Right cardiac atrium (tissue), 5 donors: ENCODE measurements at regions of chr18 and their contacts with region 1.

Region 1: GRCh38 chr18:58263055-58263957 is 219.3 kb downstream of the NEDD4L start:
- DNase-seq: no peak
- ATAC-seq: peak; percentile 43 to 56
- H3K4me3 ChIP-seq: no peak overlapping the region
- H3K27ac ChIP-seq: peak overlapping the region; percentile 55
- H3K4me1 ChIP-seq: no peaks in the 10 kb centered on the region
- H3K27me3 ChIP-seq: no peaks in the 10 kb centered on the region

Region 2: DNA sequence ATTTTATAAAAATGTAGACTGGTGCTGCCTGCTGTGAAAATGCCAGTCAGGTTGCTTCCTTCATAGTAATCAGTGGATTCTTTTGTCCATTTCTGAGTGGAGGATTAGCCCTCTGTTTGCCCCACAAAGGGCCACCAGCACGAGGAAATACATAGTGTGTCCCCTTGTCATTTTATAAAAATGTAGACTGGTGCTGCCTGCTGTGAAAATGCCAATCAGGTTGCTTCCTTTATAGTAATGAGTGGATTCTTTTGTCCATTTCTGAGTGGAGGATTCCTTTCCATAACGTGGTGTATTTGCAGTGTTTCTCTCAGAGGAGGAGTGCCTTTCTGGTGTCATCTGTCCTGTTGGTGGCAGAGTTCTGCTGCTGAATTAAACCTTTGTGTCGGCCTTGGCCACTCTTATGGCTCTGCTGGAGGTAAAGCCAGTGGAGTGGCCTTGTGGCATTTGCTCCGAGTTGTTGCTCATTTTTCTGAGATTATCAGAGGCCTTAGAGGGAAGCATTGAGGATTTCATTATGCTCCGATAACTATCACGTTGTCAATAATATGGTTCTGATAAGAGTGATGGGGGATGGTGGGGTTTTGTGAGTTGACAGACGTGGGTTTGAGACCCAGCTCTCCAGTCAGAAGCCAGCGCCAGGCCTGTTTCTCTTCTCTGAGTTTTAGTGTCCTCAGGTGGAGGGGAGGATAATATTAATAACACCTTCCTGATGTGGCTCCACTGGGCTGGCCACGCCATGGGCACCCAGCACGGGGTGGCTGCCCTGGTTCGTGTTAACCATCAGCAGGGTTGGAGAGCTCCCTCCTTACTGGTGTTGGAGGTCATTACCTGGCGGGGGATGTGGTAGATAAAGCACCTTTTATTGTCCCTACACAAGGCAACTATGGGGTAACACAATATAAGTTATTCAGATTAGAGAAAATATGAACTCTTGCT is 122.7 kb before region 1 on chr18:
- intact Hi-C with region 1: no loop called
- DNase-seq: no peak
- ATAC-seq: no peak
- H3K4me3 ChIP-seq: no peak overlapping the region
- H3K27ac ChIP-seq: no peak overlapping the region
- H3K4me1 ChIP-seq: no peaks in the 10 kb centered on the region
- H3K27me3 ChIP-seq: no peaks in the 10 kb centered on the region

Region 3: DNA sequence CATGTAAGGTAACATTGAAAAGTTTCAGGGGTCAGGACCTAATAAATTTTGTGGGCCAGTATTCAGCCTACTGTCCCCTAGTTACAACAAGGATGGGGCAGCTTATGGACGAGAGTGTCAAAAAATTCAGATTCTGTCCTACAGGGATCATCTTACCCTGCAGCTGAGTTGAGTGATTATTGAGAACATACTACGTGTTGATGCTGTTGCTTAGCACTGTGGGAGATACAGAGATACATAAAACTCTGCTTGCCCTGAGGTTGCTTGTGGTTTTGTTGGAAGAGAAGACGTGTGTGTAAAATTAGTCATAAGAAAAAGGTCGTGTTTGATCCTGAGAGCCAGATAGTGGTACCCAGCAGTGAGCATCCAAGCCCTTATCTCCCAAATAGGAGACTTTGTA is 33.9 kb after region 1 on chr18:
- intact Hi-C with region 1: loop called in 1 of 4 experiments (anchors 5 kb)
- DNase-seq: no peak
- ATAC-seq: peak; percentile 30 to 52
- H3K4me3 ChIP-seq: no peak overlapping the region
- H3K27ac ChIP-seq: peak overlapping the region; percentile 66
- H3K4me1 ChIP-seq: peaks cover 1% of the 10 kb centered on the region
- H3K27me3 ChIP-seq: no peaks in the 10 kb centered on the region